PC-9 (cell line): ENCODE measurements at regions of chr10 and their contacts with region 1.

Region 1: GRCh38 chr10:14705548-14706230 is 69.0 kb downstream of the FAM107B start:
- DNase-seq: no peak
- H3K4me3 ChIP-seq: no peak overlapping the region
- H3K27ac ChIP-seq: no peak overlapping the region
- H3K4me1 ChIP-seq: peaks cover 24% of the 10 kb centered on the region
- H3K27me3 ChIP-seq: no peaks in the 10 kb centered on the region
- CTCF ChIP-seq: no peak

Region 2: GRCh38 chr10:13712837-13713581 is 992.7 kb before region 1 on chr10:
- CTCF ChIA-PET with region 1: no interaction called
- POLR2A ChIA-PET with region 1: interaction called, 21 read pairs
- intact Hi-C with region 1: no loop called
- DNase-seq: peak; percentile 40 to 72
- H3K4me3 ChIP-seq: no peak overlapping the region
- H3K27ac ChIP-seq: peak overlapping the region; percentile 59
- H3K4me1 ChIP-seq: peaks cover 39% of the 10 kb centered on the region
- H3K27me3 ChIP-seq: no peaks in the 10 kb centered on the region
- CTCF ChIP-seq: no peak